ENCODE measurements at regions of chr1 and their contacts with region 1.

Region 1: GRCh38 chr1:11907275-11908094 is 18.7 kb downstream of the KIAA2013 start:
- DNase-seq: peak; percentile 83

Region 2: GRCh38 chr1:11805447-11806306 is 101.8 kb before region 1 on chr1 and contains the starts of genes CLCN6 and MTHFR:
- CTCF ChIA-PET with region 1: no interaction called
- POLR2A ChIA-PET with region 1: interaction called, 10 read pairs
- DNase-seq: peak; percentile 99

Region 3: DNA sequence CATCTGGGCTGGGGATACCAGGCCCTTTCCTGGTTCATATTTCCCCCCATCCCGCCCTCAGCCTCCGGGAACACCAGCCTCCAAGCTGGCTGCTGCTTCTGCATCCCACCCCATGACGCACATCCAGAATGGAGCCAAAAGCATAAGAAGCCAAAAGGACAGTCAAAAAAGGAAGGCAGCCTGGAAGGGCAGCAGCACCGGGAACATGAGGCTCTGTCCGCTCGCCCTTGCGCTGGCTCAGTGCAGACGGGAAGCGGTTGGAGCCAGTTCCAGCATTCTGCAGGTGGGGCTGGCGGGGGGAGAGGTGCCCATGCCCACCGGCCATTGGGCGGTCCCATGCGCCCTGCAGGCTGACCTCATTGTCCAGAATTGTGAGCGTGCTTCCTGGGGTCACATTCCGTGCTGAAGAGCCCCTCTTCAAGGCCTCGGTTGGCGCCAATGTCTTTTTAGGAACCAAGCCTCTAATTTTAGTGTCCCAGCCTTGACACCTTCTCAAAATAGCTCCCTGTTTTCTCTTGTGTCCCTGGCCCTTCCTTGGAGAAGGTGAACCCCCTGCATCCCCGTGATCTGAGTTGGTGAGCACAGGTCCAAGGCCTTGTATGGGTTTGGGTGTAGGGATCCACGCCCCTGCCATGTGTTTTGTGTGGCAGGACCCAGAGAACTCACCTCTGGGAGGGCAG is 20.4 kb before region 1 on chr1:
- CTCF ChIA-PET with region 1: no interaction called
- POLR2A ChIA-PET with region 1: interaction called, 16 read pairs
- DNase-seq: no peak

Region 4: GRCh38 chr1:11934302-11935056 is 27.0 kb after region 1 on chr1 and contains the start of gene PLOD1:
- CTCF ChIA-PET with region 1: no interaction called
- POLR2A ChIA-PET with region 1: interaction called, 45 read pairs
- DNase-seq: peak; percentile 83

Region 5: DNA sequence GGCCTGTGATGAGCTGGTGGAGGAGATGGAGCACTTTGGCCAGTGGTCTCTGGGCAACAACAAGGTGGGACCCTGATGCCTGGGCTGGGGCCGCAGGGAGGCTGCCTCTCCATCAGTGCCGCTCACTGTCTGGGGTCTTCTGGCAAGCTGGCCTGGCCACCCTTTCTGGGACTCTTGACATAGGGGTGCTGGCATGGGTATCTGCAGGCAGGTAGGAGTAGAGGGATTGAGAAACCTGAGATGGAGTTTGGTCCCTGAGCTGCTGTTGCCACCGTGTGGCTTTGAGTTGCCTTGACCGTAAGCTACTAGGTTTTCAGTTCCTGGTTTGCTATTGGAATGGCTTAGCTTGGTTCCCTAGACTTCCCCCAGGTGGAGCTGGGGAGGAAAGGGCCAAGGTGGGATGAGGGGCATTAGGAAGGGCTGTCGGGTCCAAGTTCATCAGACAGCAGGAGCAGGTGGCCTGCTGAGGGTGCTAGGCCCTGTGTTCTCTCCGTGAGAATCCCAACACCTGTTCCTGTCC is 59.6 kb after region 1 on chr1:
- CTCF ChIA-PET with region 1: interaction called, 3 read pairs
- POLR2A ChIA-PET with region 1: interaction called, 66 read pairs
- DNase-seq: peak; percentile 64

Region 6: GRCh38 chr1:12095452-12096263 is 188.2 kb after region 1 on chr1:
- CTCF ChIA-PET with region 1: no interaction called
- POLR2A ChIA-PET with region 1: no interaction called
- DNase-seq: peak; percentile 44

Measured in HEK293T (cell line).